ENCODE measurements at regions of chr2 and their contacts with region 1.

Region 1: GRCh38 chr2:96260404-96261260 is 5.2 kb downstream of the TMEM127 start:
- DNase-seq: peak; percentile 94
- H3K4me3 Mint-ChIP-seq: peak overlapping the region; percentile 42
- H3K27ac Mint-ChIP-seq: peak overlapping the region; percentile 83
- H3K4me1 Mint-ChIP-seq: peaks cover 34% of the 10 kb centered on the region
- H3K27me3 Mint-ChIP-seq: no peaks in the 10 kb centered on the region
- CTCF ChIP-seq: peak; percentile 45

Region 2: GRCh38 chr2:96138179-96139145 is 122.2 kb before region 1 on chr2 and contains the start of gene ASTL:
- CTCF ChIA-PET with region 1: no interaction called
- POLR2A ChIA-PET with region 1: no interaction called
- intact Hi-C with region 1: loop called (anchors 2 kb)
- DNase-seq: peak; percentile 47
- H3K4me3 Mint-ChIP-seq: no peak within 1 kb of the TSS
- H3K27ac Mint-ChIP-seq: no peak within 1 kb of the TSS
- H3K4me1 Mint-ChIP-seq: no peaks in the 10 kb centered on the region
- H3K27me3 Mint-ChIP-seq: peaks cover 17% of the 10 kb centered on the region
- CTCF ChIP-seq: peak; percentile 49
- total RNA-seq, gene ASTL: not detected in 2 replicates

Region 3: DNA sequence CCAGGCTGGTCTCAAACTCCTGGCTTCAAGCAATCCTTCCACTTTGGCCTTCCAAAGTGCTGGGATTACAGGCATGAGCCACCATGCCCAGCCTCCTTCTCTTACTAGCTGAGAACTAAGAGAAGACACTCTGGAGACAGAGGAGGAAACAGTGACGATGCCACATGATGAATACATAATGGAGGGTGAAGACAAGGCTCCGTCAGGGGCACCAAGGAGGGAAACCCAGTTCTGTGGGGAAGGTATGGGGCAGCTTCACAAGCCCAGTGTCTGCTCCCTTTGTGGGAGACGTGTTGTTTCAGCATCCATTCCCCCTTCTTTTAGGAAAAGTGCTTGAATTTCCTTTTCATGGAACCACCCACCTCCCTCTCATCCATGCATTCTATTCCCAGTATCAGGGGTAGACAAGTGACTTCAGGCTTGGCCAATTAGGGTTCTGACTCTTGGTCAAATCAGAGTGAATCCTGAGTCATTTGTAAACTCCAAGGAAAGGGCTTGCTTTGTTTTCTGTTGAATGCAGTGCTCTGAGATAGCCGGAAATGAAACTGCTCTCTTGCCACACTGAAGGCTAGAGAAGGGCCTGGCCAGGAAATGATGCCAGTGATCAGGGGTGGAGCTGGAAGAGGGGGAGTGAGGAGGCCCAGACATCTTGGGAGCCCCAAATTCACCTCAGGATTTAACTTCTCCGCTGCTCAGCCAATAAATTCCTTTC is 18.6 kb before region 1 on chr2:
- CTCF ChIA-PET with region 1: interaction called, 10 read pairs
- POLR2A ChIA-PET with region 1: interaction called, 28 read pairs
- intact Hi-C with region 1: no loop called
- DNase-seq: peak; percentile 83
- H3K4me3 Mint-ChIP-seq: no peak overlapping the region
- H3K27ac Mint-ChIP-seq: peak overlapping the region; percentile 35
- H3K4me1 Mint-ChIP-seq: peaks cover 9% of the 10 kb centered on the region
- H3K27me3 Mint-ChIP-seq: no peaks in the 10 kb centered on the region
- CTCF ChIP-seq: no peak